Cardiac septum (tissue), 1 donor: ENCODE measurements at regions of chr19 and their contacts with region 1.

Region 1: DNA sequence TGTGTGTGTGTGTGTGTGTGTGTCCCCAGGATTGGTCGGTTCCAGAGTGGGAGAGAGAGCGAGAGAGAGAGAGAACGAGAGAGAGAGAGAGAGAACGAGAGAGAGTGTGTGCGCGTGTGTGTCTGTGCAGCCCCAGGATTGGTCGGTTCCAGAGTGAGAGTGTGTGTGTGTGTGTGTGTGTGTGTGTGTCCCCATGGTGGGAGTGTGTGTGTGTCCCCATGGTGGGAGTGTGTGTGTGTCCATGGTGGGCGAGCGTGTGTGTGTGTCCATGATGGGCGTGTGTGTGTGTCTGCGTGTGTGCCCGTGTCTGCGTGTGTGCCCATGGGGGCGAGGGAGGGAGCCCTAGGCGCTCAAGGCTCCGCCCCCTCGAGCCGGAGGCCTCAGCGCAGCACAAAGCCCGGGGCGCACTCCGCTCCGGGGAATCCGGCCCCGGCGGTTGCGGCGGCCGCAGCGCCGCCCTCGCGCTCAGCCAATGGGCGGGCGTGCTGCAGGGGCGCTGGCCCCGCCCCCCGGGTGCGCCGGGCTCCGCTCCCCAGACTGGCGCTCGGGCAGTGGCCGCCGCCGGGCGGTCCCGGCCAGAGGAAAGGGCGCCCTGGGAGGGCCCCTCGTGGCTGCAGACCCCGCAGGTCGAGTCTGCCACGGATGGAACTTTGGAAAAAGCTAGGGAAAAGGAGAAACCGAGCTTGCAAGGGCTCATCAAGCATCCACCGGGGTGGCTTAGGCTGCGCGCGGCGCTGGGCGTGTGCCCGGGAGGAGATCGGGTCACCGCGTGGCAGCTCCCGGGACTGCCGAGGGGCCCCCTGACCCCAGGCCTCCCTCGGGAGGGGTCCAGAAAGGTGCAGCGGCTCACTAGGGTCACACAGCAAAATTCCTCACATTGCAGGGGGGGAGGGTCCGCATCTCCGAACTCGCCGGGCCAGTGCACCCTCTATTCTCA is 96.2 kb downstream of the INSR start:
- DNase-seq: peak; percentile 94

Region 2: DNA sequence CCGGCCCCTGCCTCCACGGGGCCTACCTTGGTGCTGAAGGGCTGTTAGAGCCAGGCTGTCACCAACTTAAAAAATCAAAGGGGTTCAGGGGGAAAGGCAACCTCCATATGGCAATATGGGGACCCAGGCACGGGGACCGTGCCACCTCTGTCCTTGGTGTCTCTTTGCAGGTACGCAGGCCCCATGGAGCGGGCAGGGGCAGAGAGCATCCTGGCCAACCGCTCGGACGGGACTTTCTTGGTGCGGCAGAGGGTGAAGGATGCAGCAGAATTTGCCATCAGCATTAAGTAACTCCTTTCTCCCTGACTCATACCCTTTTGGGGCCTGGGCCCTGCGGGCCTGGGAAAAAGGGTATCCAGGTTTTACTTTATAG is 350.2 kb before region 1 on chr19:
- intact Hi-C with region 1: no loop called
- DNase-seq: no peak

Region 3: GRCh38 chr19:7159105-7159933 is 38.7 kb before region 1 on chr19:
- intact Hi-C with region 1: loop called (anchors 5 kb)
- DNase-seq: peak; percentile 89

Region 4: GRCh38 chr19:7230826-7231225 is 32.8 kb after region 1 on chr19:
- intact Hi-C with region 1: no loop called
- DNase-seq: peak; percentile 85

Region 5: GRCh38 chr19:7257148-7258034 is 59.4 kb after region 1 on chr19:
- intact Hi-C with region 1: no loop called
- DNase-seq: no peak

Region 6: GRCh38 chr19:7373862-7374261 is 175.8 kb after region 1 on chr19:
- intact Hi-C with region 1: no loop called
- DNase-seq: no peak